MCF 10A (cell line): ENCODE measurements at regions of chr14 and their contacts with region 1.

Region 1: DNA sequence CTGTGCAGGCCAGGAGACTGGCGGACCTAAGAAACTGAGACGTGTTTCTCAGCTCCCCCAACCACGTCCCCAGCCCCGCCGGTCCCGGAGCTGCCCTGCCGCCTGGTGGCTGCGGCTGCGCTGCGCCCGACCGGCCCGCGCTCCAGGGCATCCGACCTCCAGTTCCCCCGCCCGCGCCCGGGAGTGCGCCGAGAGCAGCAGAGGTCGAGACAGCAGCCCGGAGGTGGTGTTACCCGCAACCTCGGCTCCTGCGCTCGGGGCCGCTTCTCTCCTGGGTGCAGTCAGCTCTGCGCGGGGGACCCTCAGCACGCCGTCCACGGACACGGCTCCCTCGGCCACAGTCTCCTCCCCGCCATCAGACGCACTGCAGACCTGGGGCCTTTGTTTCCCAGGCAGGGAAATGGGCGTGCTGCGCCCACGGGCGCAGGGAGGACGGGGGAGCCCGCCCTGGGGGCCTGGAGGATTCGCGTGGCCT is 21.6 kb upstream of the GPR132 start:
- DNase-seq: peak; percentile 69
- H3K4me3 Mint-ChIP-seq: peak overlapping the region; percentile 77
- H3K27ac Mint-ChIP-seq: no peak overlapping the region
- H3K4me1 Mint-ChIP-seq: peaks cover 27% of the 10 kb centered on the region
- H3K27me3 Mint-ChIP-seq: peaks cover 26% of the 10 kb centered on the region
- CTCF ChIP-seq: peak; percentile 69

Region 2: GRCh38 chr14:104494483-104494882 is 592.4 kb before region 1 on chr14:
- CTCF ChIA-PET with region 1: no interaction called
- POLR2A ChIA-PET with region 1: no interaction called
- intact Hi-C with region 1: no loop called
- DNase-seq: no peak
- H3K4me3 Mint-ChIP-seq: no peak overlapping the region
- H3K27ac Mint-ChIP-seq: no peak overlapping the region
- H3K4me1 Mint-ChIP-seq: no peaks in the 10 kb centered on the region
- H3K27me3 Mint-ChIP-seq: peaks cover 65% of the 10 kb centered on the region
- CTCF ChIP-seq: no peak

Region 3: DNA sequence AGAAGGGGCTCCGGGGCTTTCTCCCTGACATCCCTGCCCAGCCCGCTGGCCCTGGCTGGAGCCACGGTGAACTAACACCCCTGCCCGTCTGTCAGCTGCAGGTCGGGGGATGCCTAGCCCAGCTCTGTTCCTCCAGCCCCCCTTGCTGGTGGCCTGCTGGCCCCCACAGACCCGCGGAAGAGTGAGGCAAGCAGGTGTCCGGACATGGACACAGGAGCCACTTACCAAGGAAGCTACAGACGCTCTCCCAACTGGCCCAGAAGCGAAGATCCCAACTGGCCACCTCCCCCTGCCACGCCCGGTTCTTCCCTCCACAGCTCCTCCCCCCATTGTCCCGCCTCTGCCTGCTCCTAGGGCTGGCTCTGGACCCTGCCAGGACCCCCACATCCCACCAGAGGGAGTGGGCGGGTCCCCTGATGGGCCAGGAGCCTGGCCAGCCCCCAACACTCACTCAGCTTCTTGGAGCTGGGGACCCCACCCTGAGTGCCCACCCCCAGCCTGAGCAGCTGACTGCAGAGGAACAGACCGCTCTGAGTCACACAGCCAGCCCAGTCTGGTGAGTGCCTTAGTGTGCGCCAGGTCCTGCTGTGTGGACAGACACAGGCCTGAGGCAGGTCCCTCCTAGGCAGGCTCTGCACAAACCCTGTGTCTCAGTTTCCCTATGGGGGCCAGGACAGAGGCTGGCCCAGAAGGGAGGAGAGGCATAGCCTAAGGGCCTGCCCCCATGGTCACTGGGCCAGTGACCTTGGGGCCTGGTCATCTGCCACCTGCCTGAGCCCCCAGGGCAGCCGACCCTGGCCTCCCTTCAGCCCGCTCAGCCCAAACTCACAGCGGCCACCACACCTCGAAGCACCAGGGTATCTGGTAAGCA is 116.4 kb before region 1 on chr14:
- CTCF ChIA-PET with region 1: interaction called, 8 read pairs
- POLR2A ChIA-PET with region 1: interaction called, 45 read pairs
- intact Hi-C with region 1: loop called (anchors 2 kb)
- DNase-seq: peak; percentile 92
- H3K4me3 Mint-ChIP-seq: peak overlapping the region; percentile 92
- H3K27ac Mint-ChIP-seq: peak overlapping the region; percentile 99
- H3K4me1 Mint-ChIP-seq: peaks cover 35% of the 10 kb centered on the region
- H3K27me3 Mint-ChIP-seq: no peaks in the 10 kb centered on the region
- CTCF ChIP-seq: no peak

Region 4: DNA sequence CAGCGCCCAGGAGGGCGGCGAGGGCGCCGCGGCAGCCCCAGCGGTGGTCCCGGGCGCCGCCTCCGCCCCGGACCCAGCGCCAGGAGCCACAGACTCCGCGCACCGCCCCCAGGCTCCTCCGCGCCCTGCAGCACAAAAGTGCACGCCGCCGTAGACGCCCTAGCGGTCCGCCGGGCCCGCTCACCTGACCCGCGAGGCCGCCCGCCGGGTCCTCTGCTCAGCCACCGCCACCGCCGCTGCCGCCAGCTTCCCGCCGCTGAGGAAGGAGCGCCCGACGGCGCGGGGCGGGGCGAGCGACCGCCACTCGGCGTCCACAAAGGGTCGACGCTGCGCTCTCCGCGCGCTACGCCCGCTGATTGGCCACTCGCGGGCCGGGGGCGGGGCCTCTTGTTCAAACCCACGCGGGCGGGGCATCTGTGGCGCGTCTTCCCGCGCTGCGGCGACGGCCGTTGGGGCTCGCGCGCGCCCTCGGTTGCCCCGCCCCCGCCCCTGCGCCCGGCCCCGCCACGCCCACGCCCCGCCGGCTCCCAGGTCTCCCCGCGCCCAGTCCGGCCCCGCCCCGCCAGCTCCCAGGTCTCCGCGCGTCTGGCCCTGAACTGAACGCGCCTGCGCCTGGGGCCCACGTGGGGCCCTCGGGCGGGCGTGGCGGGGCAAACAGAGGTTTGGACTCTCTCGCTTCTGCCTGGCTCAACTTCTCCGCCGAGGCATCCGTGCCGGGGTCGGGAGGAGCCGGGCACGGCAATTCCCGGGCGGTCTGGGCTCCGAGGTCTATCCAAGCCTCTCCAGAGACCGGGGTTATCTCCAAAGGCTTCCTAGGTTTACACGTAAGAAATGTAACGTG is 65.8 kb before region 1 on chr14 and contains the start of gene CDCA4:
- CTCF ChIA-PET with region 1: no interaction called
- POLR2A ChIA-PET with region 1: interaction called, 10 read pairs
- intact Hi-C with region 1: no loop called
- DNase-seq: peak; percentile 96
- H3K4me3 Mint-ChIP-seq: peak within 1 kb of the TSS; percentile 94
- H3K27ac Mint-ChIP-seq: peak within 1 kb of the TSS; percentile 94
- H3K4me1 Mint-ChIP-seq: peaks cover 43% of the 10 kb centered on the region
- H3K27me3 Mint-ChIP-seq: no peaks in the 10 kb centered on the region
- CTCF ChIP-seq: no peak
- total RNA-seq, gene CDCA4: 29.3 and 33.0 TPM in 2 replicates

Region 5: GRCh38 chr14:105072892-105073719 is 13.8 kb before region 1 on chr14:
- CTCF ChIA-PET with region 1: interaction called, 10 read pairs
- POLR2A ChIA-PET with region 1: interaction called, 7 read pairs
- intact Hi-C with region 1: no loop called
- DNase-seq: no peak
- H3K4me3 Mint-ChIP-seq: no peak overlapping the region
- H3K27ac Mint-ChIP-seq: no peak overlapping the region
- H3K4me1 Mint-ChIP-seq: no peaks in the 10 kb centered on the region
- H3K27me3 Mint-ChIP-seq: peaks cover 32% of the 10 kb centered on the region
- CTCF ChIP-seq: no peak

Region 6: GRCh38 chr14:105168979-105169507 is 82.2 kb after region 1 on chr14:
- CTCF ChIA-PET with region 1: interaction called, 32 read pairs
- POLR2A ChIA-PET with region 1: interaction called, 79 read pairs
- intact Hi-C with region 1: loop called (anchors 1 kb)
- DNase-seq: no peak
- H3K4me3 Mint-ChIP-seq: peak overlapping the region; percentile 70
- H3K27ac Mint-ChIP-seq: no peak overlapping the region
- H3K4me1 Mint-ChIP-seq: peaks cover 12% of the 10 kb centered on the region
- H3K27me3 Mint-ChIP-seq: no peaks in the 10 kb centered on the region
- CTCF ChIP-seq: peak; percentile 20

Region 7: DNA sequence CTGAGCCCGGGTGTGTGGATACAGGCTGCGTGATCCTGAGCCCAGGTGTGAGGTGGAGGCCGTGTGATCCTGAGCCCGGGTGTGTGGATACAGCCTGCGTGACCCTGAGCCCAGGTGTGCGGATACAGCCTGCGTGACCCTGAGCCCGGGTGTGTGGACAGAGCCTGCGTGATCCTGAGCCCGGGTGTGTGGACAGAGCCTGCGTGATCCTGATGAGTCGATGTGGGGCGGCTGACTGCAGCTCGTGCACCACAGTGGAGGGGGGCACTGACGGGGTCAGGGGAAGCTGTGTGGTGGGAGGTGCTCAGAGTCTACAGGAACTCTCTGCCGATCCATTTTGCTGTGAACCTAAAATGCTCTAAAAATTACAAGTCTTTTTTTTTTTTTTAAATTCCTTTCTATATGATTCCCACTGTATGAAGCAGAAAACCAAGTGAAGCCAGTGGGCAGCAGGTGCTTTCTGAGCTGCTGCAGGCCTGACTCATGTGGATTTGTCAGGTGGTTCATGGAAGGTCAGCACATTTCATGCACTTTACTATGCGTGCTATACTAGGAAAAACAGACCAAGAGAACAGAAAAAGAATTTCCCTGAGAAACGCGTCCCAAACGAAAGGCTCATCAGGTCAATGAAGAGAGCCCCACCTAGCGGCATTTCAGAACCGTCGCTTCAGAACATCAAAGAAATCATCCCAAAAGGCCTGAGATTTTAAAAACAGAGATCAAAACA is 194.7 kb after region 1 on chr14:
- CTCF ChIA-PET with region 1: interaction called, 8 read pairs
- POLR2A ChIA-PET with region 1: interaction called, 3 read pairs
- intact Hi-C with region 1: loop called (anchors 1 kb)
- DNase-seq: peak; percentile 73
- H3K4me3 Mint-ChIP-seq: no peak overlapping the region
- H3K27ac Mint-ChIP-seq: no peak overlapping the region
- H3K4me1 Mint-ChIP-seq: peaks cover 6% of the 10 kb centered on the region
- H3K27me3 Mint-ChIP-seq: no peaks in the 10 kb centered on the region
- CTCF ChIP-seq: peak; percentile 62

Region 8: DNA sequence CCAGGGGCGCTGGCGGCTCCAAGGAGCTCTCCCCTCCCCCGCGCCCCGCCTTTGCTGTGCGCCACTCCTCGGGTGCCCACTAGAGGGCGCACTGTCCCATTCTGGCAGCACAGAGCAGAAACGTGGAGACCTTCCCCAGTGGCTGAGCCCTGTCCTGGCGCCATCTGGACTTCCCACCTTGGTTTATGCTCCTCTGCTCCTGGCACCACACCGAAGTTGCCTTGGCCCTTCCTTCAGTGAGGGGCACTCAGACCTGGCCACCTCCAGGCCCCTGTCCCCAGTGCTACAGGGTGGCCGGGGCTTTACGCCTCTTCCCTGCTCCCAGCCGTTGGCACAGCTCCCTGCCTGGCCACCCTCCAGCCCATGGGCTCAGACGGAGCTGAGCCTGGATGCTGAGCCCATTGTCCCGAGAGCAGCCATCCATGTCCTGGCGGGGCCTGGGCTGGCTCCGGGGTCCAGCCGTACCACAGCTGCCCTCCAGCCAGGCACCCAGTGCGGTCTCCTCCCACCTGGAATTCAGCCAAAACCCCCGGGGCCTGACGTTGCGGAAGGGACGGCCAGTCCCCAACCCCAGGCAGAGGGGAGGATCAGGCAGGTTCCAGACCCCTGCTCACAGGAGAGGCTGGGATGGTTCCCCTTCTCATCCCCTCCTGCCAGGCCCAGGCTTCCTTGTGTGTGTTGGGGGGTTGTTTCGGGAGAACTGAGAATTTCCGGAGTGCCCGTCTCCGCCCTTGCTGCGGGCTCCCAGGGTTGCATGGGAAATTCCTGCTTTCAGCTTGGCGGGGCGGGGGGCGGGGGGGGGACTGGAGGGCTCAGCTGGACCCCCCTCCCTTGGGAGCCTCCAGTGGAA is 394.3 kb after region 1 on chr14:
- CTCF ChIA-PET with region 1: no interaction called
- POLR2A ChIA-PET with region 1: no interaction called
- intact Hi-C with region 1: no loop called
- DNase-seq: peak; percentile 88
- H3K4me3 Mint-ChIP-seq: peak overlapping the region; percentile 75
- H3K27ac Mint-ChIP-seq: peak overlapping the region; percentile 99
- H3K4me1 Mint-ChIP-seq: peaks cover 24% of the 10 kb centered on the region
- H3K27me3 Mint-ChIP-seq: no peaks in the 10 kb centered on the region
- CTCF ChIP-seq: peak; percentile 98